Motor neuron (in vitro differentiated cells): ENCODE measurements at regions of chr17 and their contacts with region 1.

Region 1: DNA sequence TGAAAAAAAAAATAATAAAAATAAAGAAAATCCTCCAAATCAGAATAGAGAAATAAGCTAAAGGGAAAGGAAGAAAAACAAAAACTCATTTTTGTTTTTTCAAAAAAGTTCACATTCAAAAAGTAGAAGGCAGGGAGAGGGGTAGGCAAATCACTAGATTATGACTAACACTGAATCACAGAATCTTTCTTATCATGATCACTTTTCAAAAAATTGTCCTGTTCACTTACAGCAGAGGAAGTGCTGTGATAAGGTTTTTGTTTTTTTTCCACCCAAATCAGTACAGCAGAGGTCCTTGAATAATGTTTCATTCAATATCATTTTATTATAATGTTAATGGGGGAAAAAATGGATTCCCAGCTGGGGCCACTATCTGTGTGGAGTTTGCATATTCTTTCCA is 106.4 kb downstream of the CA4 start:
- ATAC-seq: no peak
- H3K4me3 ChIP-seq: no peak overlapping the region
- H3K27ac ChIP-seq: no peak overlapping the region
- H3K4me1 ChIP-seq: no peaks in the 10 kb centered on the region

Region 2: DNA sequence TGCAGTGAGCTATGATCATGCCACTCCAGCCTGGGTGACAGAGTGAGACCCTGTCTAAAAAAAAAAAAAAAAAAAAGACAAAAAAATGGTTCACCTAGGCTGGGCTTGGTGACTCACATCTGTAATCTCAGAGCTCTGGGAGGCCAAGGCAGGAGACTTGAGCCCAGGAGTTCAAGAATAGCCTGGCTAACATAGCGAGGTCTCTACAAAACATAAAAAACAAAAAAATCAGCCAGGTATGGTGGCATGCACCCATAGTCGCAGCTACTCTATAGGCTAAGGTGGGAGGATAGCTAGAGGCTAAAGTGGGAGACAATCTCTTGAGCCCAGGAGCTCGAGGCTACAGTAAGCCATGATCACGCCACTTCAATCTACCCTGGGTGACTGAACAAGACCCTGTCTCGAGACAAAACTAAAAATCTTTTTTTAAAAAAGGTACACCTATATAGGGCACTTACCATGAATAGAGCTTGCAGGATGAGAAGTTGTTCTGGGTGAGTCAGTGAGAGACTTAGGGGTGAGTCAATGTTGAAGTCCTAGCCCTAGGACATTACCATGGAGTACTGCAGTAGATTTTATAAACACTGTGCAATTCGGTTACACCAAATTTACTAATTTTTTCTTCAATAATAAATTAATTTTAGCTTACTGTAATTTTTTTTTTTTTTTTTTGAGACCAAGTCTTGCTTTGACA is 116.8 kb after region 1 on chr17:
- in situ Hi-C with region 1: loop called in 1 of 9 experiments (anchors 25 kb)
- ATAC-seq: peak in 5 of 8 experiments; percentile 19 to 95 (median 51)
- H3K4me3 ChIP-seq: no peak overlapping the region
- H3K27ac ChIP-seq: no peak overlapping the region
- H3K4me1 ChIP-seq: no peaks in the 10 kb centered on the region